ENCODE measurements at regions of chr6 and their contacts with region 1.

Region 1: GRCh38 chr6:37324131-37325033 is 29.4 kb upstream of the RNF8 start:
- DNase-seq: peak in 2 of 3 donors; percentile 26 to 28
- H3K4me3 ChIP-seq: no peak overlapping the region
- H3K27ac ChIP-seq: no peak overlapping the region
- H3K4me1 ChIP-seq: peaks cover 5 to 32% (median 25%) of the 10 kb centered on the region in 4 experiments
- H3K27me3 ChIP-seq: no peaks in the 10 kb centered on the region

Region 2: GRCh38 chr6:37005061-37005810 is 319.1 kb before region 1 on chr6 and contains the start of gene FGD2:
- CTCF ChIA-PET with region 1: no interaction called
- POLR2A ChIA-PET with region 1: no interaction called
- DNase-seq: peak; percentile 52 to 85 (median 85)
- H3K4me3 ChIP-seq: peak within 1 kb of the TSS in 4 of 7 experiments; percentile 11 to 65 (median 26)
- H3K27ac ChIP-seq: peak within 1 kb of the TSS in 1 of 2 experiments; percentile 10
- H3K4me1 ChIP-seq: peaks cover 6 to 53% (median 27%) of the 10 kb centered on the region in 4 experiments
- H3K27me3 ChIP-seq: no peaks in the 10 kb centered on the region

Region 3: DNA sequence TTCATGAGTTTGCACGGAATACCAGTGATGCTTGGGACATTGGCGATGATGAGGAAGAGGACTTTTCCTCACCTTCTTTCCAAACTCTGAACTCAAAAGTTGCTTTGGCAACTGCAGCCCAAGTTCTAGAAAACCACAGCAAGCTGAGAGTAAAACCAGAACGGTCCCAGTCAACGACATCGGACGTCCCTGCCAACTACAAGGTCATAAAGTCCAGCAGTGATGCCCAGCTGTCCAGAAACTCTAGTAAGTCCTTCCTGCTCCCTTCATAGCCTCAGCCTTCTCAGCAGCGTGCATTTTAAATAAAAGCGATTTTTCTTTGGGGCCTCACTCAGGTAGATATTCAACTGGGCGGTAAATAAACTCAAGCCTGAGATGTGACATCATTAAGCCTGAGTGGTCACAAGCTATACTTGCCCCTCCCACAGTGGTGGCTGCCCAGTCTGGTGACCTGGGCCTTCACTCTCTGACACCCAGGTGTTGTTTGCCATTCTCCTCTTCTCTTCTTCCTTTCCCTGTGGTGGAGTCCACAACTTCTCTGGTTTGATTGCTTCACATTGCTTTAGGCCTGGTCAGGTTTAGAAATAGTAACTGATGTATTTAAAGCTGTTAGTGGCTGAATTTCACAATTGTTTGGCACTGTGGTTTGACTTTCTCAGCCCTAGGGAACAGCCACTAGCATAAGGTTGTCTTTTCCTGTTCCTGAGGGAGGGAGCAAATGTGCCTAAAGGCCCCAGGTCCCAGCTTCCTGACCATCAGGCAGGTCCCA is 44.8 kb before region 1 on chr6:
- CTCF ChIA-PET with region 1: no interaction called
- POLR2A ChIA-PET with region 1: no interaction called
- DNase-seq: peak in 2 of 3 donors; percentile 27 to 39
- H3K4me3 ChIP-seq: no peak overlapping the region
- H3K27ac ChIP-seq: peak overlapping the region in 1 of 2 experiments; percentile 29
- H3K4me1 ChIP-seq: peaks cover 11 to 66% (median 22%) of the 10 kb centered on the region in 4 experiments
- H3K27me3 ChIP-seq: no peaks in the 10 kb centered on the region

Region 4: GRCh38 chr6:37339741-37340638 is 15.6 kb after region 1 on chr6:
- CTCF ChIA-PET with region 1: interaction called, 13 read pairs
- POLR2A ChIA-PET with region 1: no interaction called
- DNase-seq: no peak
- H3K4me3 ChIP-seq: no peak overlapping the region
- H3K27ac ChIP-seq: no peak overlapping the region
- H3K4me1 ChIP-seq: no peaks in the 10 kb centered on the region
- H3K27me3 ChIP-seq: no peaks in the 10 kb centered on the region

Measured in common myeloid progenitor, CD34-positive (primary cell).